ENCODE measurements at regions of chr1 and their contacts with region 1.

Region 1: GRCh38 chr1:62082456-62083363 is 111.9 kb upstream of the L1TD1 start:
- DNase-seq: peak; percentile 57
- ATAC-seq: peak; percentile 94
- H3K4me3 Mint-ChIP-seq: no peak overlapping the region
- H3K27ac Mint-ChIP-seq: peak overlapping the region; percentile 19
- H3K4me1 Mint-ChIP-seq: no peaks in the 10 kb centered on the region
- H3K27me3 Mint-ChIP-seq: no peaks in the 10 kb centered on the region
- CTCF ChIP-seq: peak; percentile 86

Region 2: GRCh38 chr1:62034790-62035189 is 47.9 kb before region 1 on chr1:
- CTCF ChIA-PET with region 1: interaction called, 14 read pairs
- POLR2A ChIA-PET with region 1: no interaction called
- DNase-seq: no peak
- ATAC-seq: no peak
- H3K4me3 Mint-ChIP-seq: no peak overlapping the region
- H3K27ac Mint-ChIP-seq: peak overlapping the region; percentile 41; the same call in 1 of the 2 replicates
- H3K4me1 Mint-ChIP-seq: peaks cover 62% of the 10 kb centered on the region
- H3K27me3 Mint-ChIP-seq: no peaks in the 10 kb centered on the region
- CTCF ChIP-seq: no peak

Region 3: GRCh38 chr1:62071695-62072094 is 11.0 kb before region 1 on chr1:
- CTCF ChIA-PET with region 1: interaction called, 11 read pairs
- POLR2A ChIA-PET with region 1: no interaction called
- DNase-seq: no peak
- ATAC-seq: peak; percentile 56
- H3K4me3 Mint-ChIP-seq: no peak overlapping the region
- H3K27ac Mint-ChIP-seq: no peak overlapping the region
- H3K4me1 Mint-ChIP-seq: peaks cover 9% of the 10 kb centered on the region; the same call in 1 of the 2 replicates
- H3K27me3 Mint-ChIP-seq: no peaks in the 10 kb centered on the region
- CTCF ChIP-seq: no peak

Region 4: GRCh38 chr1:62131093-62131725 is 48.5 kb after region 1 on chr1:
- CTCF ChIA-PET with region 1: interaction called, 27 read pairs
- POLR2A ChIA-PET with region 1: no interaction called
- DNase-seq: peak; percentile 64
- ATAC-seq: peak; percentile 97
- H3K4me3 Mint-ChIP-seq: no peak overlapping the region
- H3K27ac Mint-ChIP-seq: no peak overlapping the region
- H3K4me1 Mint-ChIP-seq: peaks cover 8% of the 10 kb centered on the region
- H3K27me3 Mint-ChIP-seq: no peaks in the 10 kb centered on the region
- CTCF ChIP-seq: peak; percentile 46

Measured in WTC11 (cell line).